Activated naive CD4-positive, alpha-beta T cell treated with anti-CD3 and anti-CD28 coated beads for 36 hours (primary cell): ENCODE measurements at regions of chr1 and their contacts with region 1.

Region 1: DNA sequence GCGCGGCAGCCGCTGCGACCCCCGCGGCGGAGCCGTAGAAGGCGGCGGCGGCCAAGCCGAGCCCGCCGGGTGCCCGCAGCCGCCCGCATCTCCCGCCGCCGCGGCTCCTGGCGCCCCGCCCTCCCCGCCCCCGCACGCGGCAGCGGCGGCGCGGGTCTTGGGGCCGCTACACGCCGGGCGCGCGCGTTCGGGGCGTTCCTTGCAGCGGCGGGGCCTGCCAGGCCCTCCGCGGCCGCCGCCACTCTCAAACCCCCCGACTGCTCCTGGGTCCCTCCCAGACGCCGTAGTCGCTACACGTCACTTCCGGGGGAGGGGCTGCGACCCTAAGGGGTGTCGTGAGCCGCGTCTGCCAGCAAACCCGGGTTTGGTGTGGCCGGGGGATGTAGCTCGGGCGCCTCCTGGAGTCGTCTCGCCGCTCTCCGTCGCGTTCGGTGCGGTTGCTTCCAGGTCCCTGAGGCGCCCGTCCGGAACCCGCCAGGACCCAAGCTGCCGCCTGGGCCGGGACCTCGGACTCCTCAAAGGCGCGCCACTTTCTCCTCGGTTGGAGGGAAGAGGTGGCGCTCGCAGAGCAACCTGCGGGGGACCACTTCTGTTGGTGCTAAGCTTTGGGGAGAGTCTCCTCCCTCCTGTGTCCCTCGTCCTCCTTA is at the start of gene ELK4:
- DNase-seq: peak; percentile 100
- H3K4me3 Mint-ChIP-seq: peak within 1 kb of the TSS; percentile 81
- H3K27ac Mint-ChIP-seq: peak within 1 kb of the TSS; percentile 92
- H3K4me1 Mint-ChIP-seq: peaks cover 37% of the 10 kb centered on the region
- H3K27me3 Mint-ChIP-seq: no peaks in the 10 kb centered on the region
- total RNA-seq, gene ELK4: 60.5 to 62.4 TPM

Region 2: DNA sequence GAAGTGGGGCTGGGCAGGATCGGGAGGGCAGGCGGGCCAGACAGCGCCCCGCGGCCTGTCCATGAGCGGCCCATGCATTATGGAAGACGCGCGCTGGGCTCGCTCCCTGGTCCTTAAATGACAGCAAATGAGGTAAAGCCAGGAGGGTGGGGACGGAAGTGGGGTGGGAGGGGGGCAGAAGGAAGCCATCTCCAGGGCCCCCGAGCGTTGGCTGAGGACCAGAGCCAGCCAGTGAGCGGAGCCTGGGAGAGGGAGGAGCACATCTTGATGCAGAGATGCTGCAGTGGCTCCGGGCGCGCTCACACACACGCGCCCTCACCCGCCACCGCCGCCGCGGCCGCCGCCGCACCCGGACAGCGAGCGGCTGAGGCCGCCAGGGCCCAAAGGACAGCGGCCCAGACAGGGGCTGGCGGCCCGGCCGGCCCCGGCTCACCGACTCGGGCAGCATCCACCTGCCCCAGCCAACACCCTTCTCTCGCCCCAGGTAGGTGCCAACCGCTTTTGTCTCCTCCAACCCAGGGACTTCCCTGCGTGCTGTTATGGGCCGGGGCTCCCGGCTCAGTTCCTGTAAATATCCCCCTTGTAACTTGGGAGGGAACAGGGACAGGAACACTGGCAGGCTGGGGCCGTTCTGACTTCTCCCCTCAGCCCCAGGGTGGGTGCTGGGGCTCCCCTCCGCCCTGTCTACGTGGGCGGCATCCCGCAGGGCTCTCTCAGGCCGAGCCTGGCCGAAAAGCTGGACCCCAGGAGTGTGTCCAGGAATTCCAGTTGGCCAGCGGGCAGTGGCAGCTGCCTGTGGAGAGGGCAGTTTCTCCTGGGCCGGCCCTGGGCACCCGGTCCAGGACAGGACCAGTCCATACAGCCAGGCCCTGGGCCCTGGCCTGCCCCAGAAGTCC is 588.7 kb before region 1 on chr1 and contains the start of gene CNTN2:
- CTCF ChIA-PET with region 1: no interaction called
- intact Hi-C with region 1: no loop called
- DNase-seq: no peak
- H3K4me3 Mint-ChIP-seq: no peak within 1 kb of the TSS
- H3K27ac Mint-ChIP-seq: no peak within 1 kb of the TSS
- H3K4me1 Mint-ChIP-seq: no peaks in the 10 kb centered on the region
- H3K27me3 Mint-ChIP-seq: peaks cover 58% of the 10 kb centered on the region
- total RNA-seq, gene CNTN2: not detected

Region 3: GRCh38 chr1:205121660-205122488 is 510.0 kb before region 1 on chr1 and contains the start of gene RBBP5:
- CTCF ChIA-PET with region 1: no interaction called
- intact Hi-C with region 1: loop called (anchors 1 kb)
- DNase-seq: peak; percentile 98
- H3K4me3 Mint-ChIP-seq: peak within 1 kb of the TSS; percentile 93
- H3K27ac Mint-ChIP-seq: peak within 1 kb of the TSS; percentile 98
- H3K4me1 Mint-ChIP-seq: peaks cover 32% of the 10 kb centered on the region
- H3K27me3 Mint-ChIP-seq: no peaks in the 10 kb centered on the region
- total RNA-seq, gene RBBP5: 26.0 to 27.5 TPM

Region 4: DNA sequence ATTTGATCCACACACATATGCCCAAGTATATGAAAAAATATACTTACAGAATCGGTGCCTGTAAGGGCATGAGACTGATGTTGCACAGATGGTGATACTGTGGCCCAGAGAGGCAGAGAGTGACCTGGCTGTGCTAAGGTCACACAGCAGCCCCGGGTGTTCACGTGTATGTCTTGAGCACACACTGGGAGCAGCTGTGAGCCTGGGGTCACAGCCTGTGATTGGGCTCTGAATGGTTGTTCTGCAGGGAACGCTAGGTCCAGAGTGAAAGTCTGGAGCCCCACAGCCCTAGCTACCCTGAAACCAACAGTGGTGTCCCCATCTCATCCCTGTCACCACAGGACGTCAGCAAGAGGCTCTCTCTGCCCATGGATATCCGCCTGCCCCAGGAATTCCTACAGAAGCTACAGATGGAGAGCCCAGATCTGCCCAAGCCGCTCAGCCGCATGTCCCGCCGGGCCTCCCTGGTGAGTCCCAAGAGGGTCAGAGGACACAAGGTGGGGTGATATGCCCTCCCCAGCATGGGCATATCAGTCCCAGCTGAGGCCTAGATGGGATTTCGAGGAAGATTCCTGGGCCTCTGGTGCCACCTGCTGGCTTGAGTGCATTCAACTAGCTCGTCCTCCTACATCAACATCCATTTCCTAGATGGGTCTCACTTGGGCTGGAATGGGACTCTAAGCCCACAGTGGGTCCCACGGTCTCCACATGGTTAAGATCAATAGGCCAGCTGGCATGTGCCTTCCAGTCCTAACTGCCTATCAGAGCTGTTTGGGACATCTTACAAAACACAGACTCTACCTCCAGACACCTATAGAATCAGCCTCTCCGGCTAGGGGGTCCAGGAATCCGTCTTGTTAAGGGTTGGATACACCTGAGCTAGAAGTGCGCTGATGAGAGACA is 107.7 kb before region 1 on chr1:
- CTCF ChIA-PET with region 1: interaction called, 16 read pairs
- intact Hi-C with region 1: loop called (anchors 1 kb)
- DNase-seq: peak; percentile 88
- H3K4me3 Mint-ChIP-seq: no peak overlapping the region
- H3K27ac Mint-ChIP-seq: no peak overlapping the region
- H3K4me1 Mint-ChIP-seq: no peaks in the 10 kb centered on the region
- H3K27me3 Mint-ChIP-seq: no peaks in the 10 kb centered on the region

Region 5: GRCh38 chr1:205600085-205600484 is 31.8 kb before region 1 on chr1:
- CTCF ChIA-PET with region 1: interaction called, 262 read pairs
- intact Hi-C with region 1: loop called (anchors 2 kb)
- DNase-seq: peak; percentile 50
- H3K4me3 Mint-ChIP-seq: no peak overlapping the region
- H3K27ac Mint-ChIP-seq: peak overlapping the region; percentile 59
- H3K4me1 Mint-ChIP-seq: peaks cover 43% of the 10 kb centered on the region
- H3K27me3 Mint-ChIP-seq: no peaks in the 10 kb centered on the region

Region 6: DNA sequence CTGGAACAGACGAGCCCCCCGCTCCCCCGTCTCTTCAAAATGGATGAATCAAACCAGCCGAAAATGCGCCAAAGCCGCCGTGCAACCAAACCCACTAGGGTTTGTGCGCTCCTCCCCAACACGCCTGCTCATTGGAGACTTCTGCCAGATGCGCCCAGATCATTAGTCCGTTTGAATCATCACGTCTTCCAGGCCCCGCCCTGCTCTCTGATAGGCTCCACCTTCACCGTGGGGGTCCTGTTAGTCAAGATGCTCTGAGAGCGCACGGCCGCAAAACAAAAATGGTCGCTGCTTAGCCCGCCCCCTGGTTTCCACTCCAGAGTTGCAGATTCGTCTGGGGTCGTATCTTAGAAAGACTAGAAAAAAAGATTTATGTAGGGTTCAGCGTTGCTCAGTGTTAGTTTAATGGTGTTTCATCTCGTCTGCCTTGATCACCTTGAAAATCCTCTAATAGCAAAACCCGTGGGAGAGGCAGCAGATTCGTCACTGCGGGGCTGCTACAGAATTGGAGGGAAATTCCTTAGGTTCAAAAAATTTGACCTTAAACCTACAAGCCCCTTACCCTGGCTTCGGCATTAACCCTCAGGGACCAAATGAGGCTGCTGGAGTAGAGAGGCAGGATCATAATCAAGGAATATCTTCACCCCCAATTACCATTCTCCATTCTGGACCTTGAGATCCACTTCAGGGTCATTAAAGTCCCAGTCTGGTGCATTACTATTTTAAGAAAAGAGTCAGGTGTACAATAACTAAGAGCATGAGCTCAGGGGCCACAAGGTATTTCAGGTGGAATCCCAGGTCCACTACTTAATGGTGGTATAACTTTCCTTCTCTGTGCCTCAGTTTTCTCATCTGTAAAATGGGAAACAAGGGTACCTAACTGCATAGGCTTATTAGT is 118.5 kb after region 1 on chr1 and contains the start of gene NUCKS1:
- CTCF ChIA-PET with region 1: no interaction called
- intact Hi-C with region 1: loop called (anchors 1 kb)
- DNase-seq: peak; percentile 99
- H3K4me3 Mint-ChIP-seq: peak within 1 kb of the TSS; percentile 95
- H3K27ac Mint-ChIP-seq: peak within 1 kb of the TSS; percentile 100
- H3K4me1 Mint-ChIP-seq: peaks cover 30% of the 10 kb centered on the region
- H3K27me3 Mint-ChIP-seq: no peaks in the 10 kb centered on the region
- total RNA-seq, gene NUCKS1: 215 to 218 TPM

Region 7: GRCh38 chr1:206556750-206557635 is 925.1 kb after region 1 on chr1:
- CTCF ChIA-PET with region 1: no interaction called
- intact Hi-C with region 1: loop called (anchors 5 kb)
- DNase-seq: peak; percentile 92
- H3K4me3 Mint-ChIP-seq: peak overlapping the region; percentile 96
- H3K27ac Mint-ChIP-seq: peak overlapping the region; percentile 100
- H3K4me1 Mint-ChIP-seq: peaks cover 61% of the 10 kb centered on the region
- H3K27me3 Mint-ChIP-seq: no peaks in the 10 kb centered on the region